Activated naive CD4-positive, alpha-beta T cell treated with anti-CD3 and anti-CD28 coated beads for 36 hours (primary cell): ENCODE measurements at regions of chr11 and their contacts with region 1.

Region 1: DNA sequence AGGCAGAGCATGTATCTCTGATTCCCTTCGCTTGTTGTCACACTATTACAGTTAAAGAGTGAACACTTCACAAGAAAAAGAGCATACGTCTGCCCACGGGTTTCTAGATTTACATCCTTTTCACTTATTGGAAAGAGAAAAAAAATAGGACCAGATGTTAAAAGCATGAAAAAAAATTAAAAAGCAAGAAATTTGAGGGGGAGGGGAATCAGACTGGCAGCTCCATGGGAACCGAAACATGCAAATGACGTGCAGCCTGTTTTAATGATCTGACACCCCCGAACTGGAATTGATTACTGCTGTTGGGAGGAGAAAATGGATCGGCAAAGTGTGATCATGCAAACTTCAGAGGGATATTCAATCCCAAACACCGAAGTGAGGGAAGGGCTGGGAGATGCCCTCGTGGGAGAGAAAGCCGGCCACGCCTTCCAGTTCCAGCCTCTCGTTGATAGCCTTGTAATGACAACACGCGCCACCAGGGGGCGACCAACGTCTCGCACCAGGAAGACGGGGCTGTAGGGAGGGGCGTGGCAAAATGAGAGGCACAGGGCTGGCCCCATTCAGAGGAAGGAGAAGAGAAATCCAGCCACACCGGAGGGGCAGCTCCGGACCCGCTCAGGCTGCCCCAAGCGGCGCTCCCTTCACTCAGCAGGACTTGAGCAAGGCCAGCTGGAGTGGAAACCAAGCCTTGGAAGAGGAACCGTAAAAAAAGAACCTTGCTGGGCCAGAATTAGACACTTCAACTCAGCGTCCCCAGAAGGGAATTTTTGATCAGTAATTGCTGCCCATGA is 53.8 kb upstream of the SYT13 start:
- DNase-seq: peak; percentile 96
- H3K4me3 Mint-ChIP-seq: peak overlapping the region; percentile 53
- H3K27ac Mint-ChIP-seq: no peak overlapping the region
- H3K4me1 Mint-ChIP-seq: peaks cover 8% of the 10 kb centered on the region
- H3K27me3 Mint-ChIP-seq: peaks cover 3% of the 10 kb centered on the region

Region 2: DNA sequence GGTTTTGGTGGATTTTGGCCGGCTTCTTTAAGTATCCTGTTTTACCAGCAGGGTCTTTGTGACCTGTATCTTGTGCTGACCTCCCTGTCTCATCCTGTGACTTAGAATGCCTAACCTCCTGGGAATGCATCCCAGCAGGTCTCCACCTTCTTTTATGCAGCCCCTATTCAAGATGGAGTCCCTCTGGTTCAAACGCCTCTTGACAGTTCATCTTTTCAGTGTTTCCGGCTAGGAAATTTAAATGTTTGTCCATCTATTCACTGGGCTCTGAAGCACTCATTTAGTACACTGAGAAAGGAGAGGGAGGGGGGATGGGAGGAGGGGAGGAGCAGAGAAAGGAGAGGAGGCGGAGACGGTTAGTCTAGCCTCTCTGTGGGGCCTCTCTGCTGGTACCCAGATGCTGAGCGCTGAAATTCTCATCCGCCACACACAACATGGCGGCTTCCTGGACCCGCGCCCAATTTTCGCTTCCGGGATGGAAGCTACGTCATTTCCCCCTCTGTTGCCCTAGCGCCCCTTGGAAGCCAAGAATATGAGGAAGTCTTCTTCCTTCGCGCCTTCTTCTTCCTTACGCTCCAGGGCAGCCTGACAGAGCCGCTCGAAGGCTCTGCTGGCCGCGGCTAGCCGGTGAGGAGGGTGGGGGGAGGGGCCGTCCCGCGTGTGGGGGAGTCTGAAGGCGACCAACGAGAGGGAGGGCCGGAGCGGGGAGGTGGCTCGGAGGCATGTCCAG is 15.2 kb after region 1 on chr11:
- CTCF ChIA-PET with region 1: interaction called, 25 read pairs
- intact Hi-C with region 1: loop called (anchors 1 kb)
- DNase-seq: peak; percentile 92
- H3K4me3 Mint-ChIP-seq: peak overlapping the region; percentile 73
- H3K27ac Mint-ChIP-seq: peak overlapping the region; percentile 71
- H3K4me1 Mint-ChIP-seq: peaks cover 18% of the 10 kb centered on the region
- H3K27me3 Mint-ChIP-seq: no peaks in the 10 kb centered on the region

Region 3: GRCh38 chr11:45405916-45406670 is 66.2 kb after region 1 on chr11:
- CTCF ChIA-PET with region 1: no interaction called
- intact Hi-C with region 1: loop called (anchors 10 kb)
- DNase-seq: no peak
- H3K4me3 Mint-ChIP-seq: no peak overlapping the region
- H3K27ac Mint-ChIP-seq: no peak overlapping the region
- H3K4me1 Mint-ChIP-seq: no peaks in the 10 kb centered on the region
- H3K27me3 Mint-ChIP-seq: peaks cover 17% of the 10 kb centered on the region